ENCODE measurements at regions of chr1 and their contacts with region 1.

Region 1: GRCh38 chr1:92317836-92318493 is 19.1 kb downstream of the RPAP2 start:
- DNase-seq: peak in 3 of 9 donors; percentile 7 to 27 (median 8)
- ATAC-seq: peak; percentile 46
- H3K4me3 ChIP-seq: no peak overlapping the region
- H3K4me3 Mint-ChIP-seq: peak overlapping the region; percentile 16 to 83 (median 65)
- H3K27ac ChIP-seq: no peak overlapping the region
- H3K27ac Mint-ChIP-seq: peak overlapping the region; percentile 61 to 96 (median 78)
- H3K4me1 ChIP-seq: peaks cover 40 to 55% of the 10 kb centered on the region in 2 donors
- H3K4me1 Mint-ChIP-seq: peaks cover 35 to 64% (median 62%) of the 10 kb centered on the region in 7 donors
- H3K27me3 ChIP-seq: no peaks in the 10 kb centered on the region
- H3K27me3 Mint-ChIP-seq: no peaks in the 10 kb centered on the region

Region 2: DNA sequence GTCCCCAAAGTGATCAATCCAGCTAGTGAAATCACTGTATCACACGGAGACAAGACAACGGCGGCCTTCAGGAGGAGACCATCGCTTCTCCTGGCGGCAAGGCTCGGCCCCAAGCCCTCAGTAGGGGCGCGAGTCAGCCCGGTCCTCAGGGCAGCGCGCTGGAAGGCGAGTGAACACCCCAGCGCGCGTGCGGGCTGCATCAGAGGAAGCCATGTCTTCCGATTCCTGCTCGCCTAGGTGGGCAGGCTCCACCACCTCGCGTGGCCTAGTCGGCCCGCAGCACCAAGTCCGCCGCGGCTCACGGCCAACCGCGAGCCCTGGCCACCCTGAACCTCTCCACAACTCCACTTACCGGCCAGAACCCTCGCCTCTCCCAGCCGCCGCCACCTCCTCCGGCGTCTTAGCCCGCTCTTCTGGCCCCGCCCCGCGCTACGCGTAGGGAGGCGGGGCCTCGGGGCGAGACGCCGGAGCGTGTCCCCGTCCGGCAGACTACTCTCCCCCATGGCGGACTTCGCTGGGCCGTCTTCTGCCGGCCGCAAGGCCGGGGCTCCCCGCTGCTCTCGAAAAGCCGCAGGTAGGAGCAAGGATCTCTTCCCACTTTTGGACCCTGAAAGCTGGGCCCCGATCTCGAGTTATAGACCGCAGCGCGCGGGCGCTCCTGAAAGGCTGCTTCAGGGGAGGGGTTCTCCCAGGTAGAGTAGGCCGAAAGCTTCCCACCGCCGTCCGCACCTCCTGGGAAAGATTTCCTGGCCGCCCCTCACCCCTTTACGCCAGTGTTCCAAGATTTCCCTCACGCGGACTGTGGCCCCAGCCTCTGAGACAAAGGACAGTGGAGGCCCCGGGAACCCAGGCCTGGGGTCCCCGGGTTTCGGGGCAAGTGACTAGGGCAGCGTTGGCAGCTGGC is 19.1 kb before region 1 on chr1 and contains the starts of genes GLMN and RPAP2:
- CTCF ChIA-PET with region 1: interaction called, 3 read pairs
- POLR2A ChIA-PET with region 1: interaction called, 14 read pairs
- intact Hi-C with region 1: loop called (anchors 1 kb)
- DNase-seq: peak; percentile 55 to 86 (median 75)
- ATAC-seq: peak; percentile 97
- H3K4me3 ChIP-seq: peak within 1 kb of the TSS; percentile 93
- H3K4me3 Mint-ChIP-seq: peak within 1 kb of the TSS; percentile 93 to 99 (median 97)
- H3K27ac ChIP-seq: peak within 1 kb of the TSS; percentile 98
- H3K27ac Mint-ChIP-seq: peak within 1 kb of the TSS; percentile 91 to 99 (median 97)
- H3K4me1 ChIP-seq: peaks cover 10 to 19% of the 10 kb centered on the region in 2 donors
- H3K4me1 Mint-ChIP-seq: peaks cover 30 to 61% (median 48%) of the 10 kb centered on the region in 7 donors
- H3K27me3 ChIP-seq: no peaks in the 10 kb centered on the region
- H3K27me3 Mint-ChIP-seq: no peaks in the 10 kb centered on the region
- total RNA-seq, gene GLMN: 13.9 to 27.0 (median 14.3) TPM
- total RNA-seq, gene RPAP2: 29.5 to 50.7 (median 42.3) TPM

Region 3: DNA sequence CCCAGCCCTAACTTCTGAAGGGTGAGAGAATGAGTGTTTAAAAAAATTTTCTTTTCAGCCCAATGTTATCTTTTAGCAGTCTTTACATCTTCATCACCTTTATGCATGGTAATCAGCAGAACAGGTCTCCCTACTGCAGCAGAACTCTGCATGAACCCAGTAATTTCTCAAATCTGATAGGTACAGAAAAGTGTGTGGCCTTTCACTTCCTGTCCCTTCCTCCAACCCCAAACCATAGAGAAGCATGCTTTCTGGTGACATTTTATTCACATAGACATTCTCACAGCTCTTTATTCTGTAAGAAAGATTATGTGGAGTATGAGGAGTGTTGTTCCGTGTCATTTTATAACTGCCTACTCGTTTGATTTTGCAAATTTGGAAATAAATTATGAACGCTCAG is 49.5 kb after region 1 on chr1:
- CTCF ChIA-PET with region 1: no interaction called
- POLR2A ChIA-PET with region 1: no interaction called
- intact Hi-C with region 1: loop called in 1 of 2 experiments (anchors 5 kb)
- DNase-seq: peak in 2 of 9 donors; percentile 4 to 13
- ATAC-seq: peak; percentile 57
- H3K4me3 ChIP-seq: no peak overlapping the region
- H3K4me3 Mint-ChIP-seq: peak overlapping the region in 5 of 10 donors; percentile 2 to 18 (median 14)
- H3K27ac ChIP-seq: no peak overlapping the region
- H3K27ac Mint-ChIP-seq: peak overlapping the region in 5 of 9 donors; percentile 4 to 53 (median 9)
- H3K4me1 ChIP-seq: peaks cover 5 to 33% of the 10 kb centered on the region in 2 donors
- H3K4me1 Mint-ChIP-seq: peaks cover 18 to 57% (median 50%) of the 10 kb centered on the region in 7 donors
- H3K27me3 ChIP-seq: no peaks in the 10 kb centered on the region
- H3K27me3 Mint-ChIP-seq: no peaks in the 10 kb centered on the region

Region 4: GRCh38 chr1:92411511-92411910 is 93.5 kb after region 1 on chr1:
- CTCF ChIA-PET with region 1: no interaction called
- POLR2A ChIA-PET with region 1: no interaction called
- intact Hi-C with region 1: loop called in 1 of 2 experiments (anchors 2 kb)
- DNase-seq: no peak
- ATAC-seq: no peak
- H3K4me3 ChIP-seq: no peak overlapping the region
- H3K4me3 Mint-ChIP-seq: peak overlapping the region in 9 of 10 donors; percentile 15 to 73 (median 55)
- H3K27ac ChIP-seq: no peak overlapping the region
- H3K27ac Mint-ChIP-seq: peak overlapping the region in 5 of 9 donors; percentile 28 to 84 (median 72)
- H3K4me1 ChIP-seq: peaks cover 23 to 27% of the 10 kb centered on the region in 2 donors
- H3K4me1 Mint-ChIP-seq: peaks cover 23 to 47% (median 39%) of the 10 kb centered on the region in 7 donors
- H3K27me3 ChIP-seq: no peaks in the 10 kb centered on the region
- H3K27me3 Mint-ChIP-seq: no peaks in the 10 kb centered on the region

Region 5: GRCh38 chr1:92583821-92584760 is 266.1 kb after region 1 on chr1:
- CTCF ChIA-PET with region 1: interaction called, 4 read pairs
- POLR2A ChIA-PET with region 1: interaction called, 3 read pairs
- intact Hi-C with region 1: loop called in 1 of 2 experiments (anchors 1 kb)
- DNase-seq: peak in 7 of 9 donors; percentile 50 to 82 (median 76)
- ATAC-seq: peak; percentile 93
- H3K4me3 ChIP-seq: peak overlapping the region; percentile 30
- H3K4me3 Mint-ChIP-seq: peak overlapping the region; percentile 25 to 88 (median 68)
- H3K27ac ChIP-seq: peak overlapping the region; percentile 47
- H3K27ac Mint-ChIP-seq: peak overlapping the region; percentile 41 to 93 (median 86)
- H3K4me1 ChIP-seq: peaks cover 27 to 38% of the 10 kb centered on the region in 2 donors
- H3K4me1 Mint-ChIP-seq: peaks cover 22 to 66% (median 63%) of the 10 kb centered on the region in 7 donors
- H3K27me3 ChIP-seq: no peaks in the 10 kb centered on the region
- H3K27me3 Mint-ChIP-seq: no peaks in the 10 kb centered on the region